ENCODE measurements at regions of chr19 and their contacts with region 1.

Region 1: GRCh38 chr19:46402725-46403124 is 10.6 kb downstream of the CCDC8 start:
- DNase-seq: no peak
- ATAC-seq: no peak
- H3K4me3 ChIP-seq: no peak overlapping the region
- H3K27ac ChIP-seq: no peak overlapping the region
- H3K4me1 ChIP-seq: no peaks in the 10 kb centered on the region
- H3K27me3 ChIP-seq: no peaks in the 10 kb centered on the region
- CTCF ChIP-seq: no peak
- POLR2A ChIP-seq: no peak
- RAD21 ChIP-seq: no peak

Region 2: DNA sequence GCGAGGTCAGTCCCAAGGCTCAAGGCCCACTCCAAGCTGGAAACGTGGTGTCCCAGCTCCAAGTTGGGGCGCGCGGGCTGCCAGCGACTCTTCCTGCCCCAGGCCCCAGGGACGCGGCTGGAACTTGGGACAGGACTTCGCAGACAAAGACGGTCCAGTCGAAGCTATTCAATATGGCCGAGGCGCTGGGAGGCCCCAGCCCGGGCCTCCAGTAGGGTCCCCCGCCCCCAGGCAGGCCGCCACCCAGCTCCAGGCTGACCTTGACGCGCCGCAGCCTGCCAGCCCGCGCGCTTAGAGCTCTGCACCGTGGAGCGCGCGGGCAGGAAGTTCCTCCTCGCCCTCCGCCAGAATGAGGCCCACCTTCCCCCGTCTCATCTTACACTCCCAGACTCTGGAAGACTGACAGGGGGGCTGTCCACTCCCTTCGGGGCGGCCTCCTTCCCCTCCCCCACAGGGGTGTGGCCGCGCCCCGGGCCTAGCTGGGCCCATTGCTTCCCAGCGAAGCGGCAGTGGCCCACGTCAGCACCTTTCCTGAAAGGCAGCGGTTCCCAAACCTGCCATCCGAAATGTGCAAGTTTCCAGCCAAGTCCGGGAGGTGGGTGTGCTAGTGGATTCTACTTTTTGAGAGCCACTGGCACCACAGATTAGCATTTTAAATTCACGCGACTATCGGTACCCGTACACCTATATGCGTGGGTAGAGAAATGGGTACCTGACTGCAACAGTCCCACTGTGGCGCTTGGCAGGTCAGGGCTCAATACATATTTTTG is 10.7 kb after region 1 on chr19 and contains the start of gene CCDC8:
- CTCF ChIA-PET with region 1: no interaction called
- POLR2A ChIA-PET with region 1: no interaction called
- RAD21 ChIA-PET with region 1: no interaction called
- intact Hi-C with region 1: no loop called
- DNase-seq: no peak
- ATAC-seq: no peak
- H3K4me3 ChIP-seq: no peak within 1 kb of the TSS
- H3K27ac ChIP-seq: no peak within 1 kb of the TSS
- H3K4me1 ChIP-seq: peaks cover 12 to 16% of the 10 kb centered on the region in 2 experiments
- H3K27me3 ChIP-seq: no peaks in the 10 kb centered on the region
- CTCF ChIP-seq: no peak
- POLR2A ChIP-seq: no peak
- RAD21 ChIP-seq: no peak
- total RNA-seq, gene CCDC8: 0.10 TPM

Region 3: DNA sequence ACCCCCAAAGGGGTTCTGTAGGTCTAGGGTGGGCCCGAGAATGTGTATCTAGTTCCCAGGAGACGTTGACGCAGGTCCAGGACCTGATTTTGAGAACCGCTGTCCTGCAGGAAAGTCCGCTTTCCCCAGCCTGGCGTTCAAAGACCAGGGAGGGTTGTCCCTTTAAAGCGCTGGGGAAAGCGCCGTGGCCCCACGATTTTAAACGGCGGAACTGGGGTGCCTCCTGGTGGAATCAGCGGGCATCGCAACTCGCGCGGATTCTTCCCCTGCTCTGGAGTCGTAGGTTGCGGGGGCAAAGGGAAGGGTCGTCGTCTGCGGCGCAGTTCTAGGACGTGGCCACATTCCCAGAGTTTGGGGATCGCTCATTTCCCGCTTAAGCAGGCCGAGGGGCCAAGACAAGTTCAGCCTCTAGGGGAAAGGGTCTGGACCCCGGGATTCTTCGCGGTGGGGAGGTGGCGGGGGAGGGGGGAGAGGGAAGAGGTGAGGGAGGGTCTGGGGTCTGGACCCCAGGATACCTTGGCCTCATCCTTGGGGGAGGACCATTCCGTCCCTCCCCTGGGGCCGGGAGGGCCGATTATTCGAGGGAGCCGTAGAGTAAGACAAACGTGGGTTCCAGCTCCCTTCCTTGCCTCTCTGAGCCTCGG is 85.2 kb after region 1 on chr19:
- CTCF ChIA-PET with region 1: interaction called, 5 read pairs
- POLR2A ChIA-PET with region 1: no interaction called
- RAD21 ChIA-PET with region 1: no interaction called
- intact Hi-C with region 1: loop called (anchors 1 kb)
- DNase-seq: peak; percentile 29
- ATAC-seq: peak; percentile 92
- H3K4me3 ChIP-seq: no peak overlapping the region; a peak in 1 of 4 replicates
- H3K27ac ChIP-seq: no peak overlapping the region
- H3K4me1 ChIP-seq: no peaks in the 10 kb centered on the region
- H3K27me3 ChIP-seq: no peaks in the 10 kb centered on the region
- CTCF ChIP-seq: peak; percentile 92 to 98 (median 95)
- POLR2A ChIP-seq: no peak
- RAD21 ChIP-seq: peak; percentile 98